ENCODE measurements at regions of chr13 and their contacts with region 1.

Region 1: DNA sequence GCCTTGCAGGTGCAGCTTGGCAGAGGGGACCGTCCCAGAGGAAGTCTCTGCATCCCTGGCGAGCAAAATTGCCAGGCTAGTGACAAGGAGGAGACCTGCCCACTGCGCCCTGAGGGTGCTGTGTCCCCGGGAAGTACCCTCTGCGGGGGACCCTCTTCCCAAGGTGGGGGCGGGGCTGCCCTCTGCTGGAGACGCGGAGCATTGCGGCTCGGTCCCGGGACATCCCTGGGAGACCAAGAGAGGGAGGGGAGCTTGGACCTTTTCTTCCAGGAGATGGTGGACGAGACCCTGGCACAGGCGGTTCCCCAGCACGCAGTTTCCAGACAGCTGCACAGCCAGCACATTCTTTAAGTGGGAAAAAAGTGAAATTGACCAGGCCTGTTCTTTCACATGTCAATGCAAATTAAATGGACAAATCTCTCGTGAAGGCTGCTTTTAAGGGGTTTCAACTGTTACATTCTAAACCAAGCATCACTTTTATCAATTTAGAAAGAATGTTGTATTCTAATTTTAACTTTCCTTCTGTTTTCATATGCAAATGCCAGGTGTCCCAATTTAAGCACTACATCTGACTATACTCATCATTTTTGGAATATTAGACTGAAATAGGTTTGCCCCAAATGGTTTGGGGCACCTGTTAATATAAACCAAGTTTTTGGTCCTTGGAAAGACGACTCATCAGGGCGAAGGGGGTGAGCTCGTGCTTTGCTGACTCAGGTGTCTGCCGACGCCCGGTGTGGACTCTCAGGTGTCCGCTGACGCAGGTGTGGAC is 60.7 kb downstream of the MCF2L start:
- DNase-seq: no peak
- ATAC-seq: peak; percentile 66

Region 2: DNA sequence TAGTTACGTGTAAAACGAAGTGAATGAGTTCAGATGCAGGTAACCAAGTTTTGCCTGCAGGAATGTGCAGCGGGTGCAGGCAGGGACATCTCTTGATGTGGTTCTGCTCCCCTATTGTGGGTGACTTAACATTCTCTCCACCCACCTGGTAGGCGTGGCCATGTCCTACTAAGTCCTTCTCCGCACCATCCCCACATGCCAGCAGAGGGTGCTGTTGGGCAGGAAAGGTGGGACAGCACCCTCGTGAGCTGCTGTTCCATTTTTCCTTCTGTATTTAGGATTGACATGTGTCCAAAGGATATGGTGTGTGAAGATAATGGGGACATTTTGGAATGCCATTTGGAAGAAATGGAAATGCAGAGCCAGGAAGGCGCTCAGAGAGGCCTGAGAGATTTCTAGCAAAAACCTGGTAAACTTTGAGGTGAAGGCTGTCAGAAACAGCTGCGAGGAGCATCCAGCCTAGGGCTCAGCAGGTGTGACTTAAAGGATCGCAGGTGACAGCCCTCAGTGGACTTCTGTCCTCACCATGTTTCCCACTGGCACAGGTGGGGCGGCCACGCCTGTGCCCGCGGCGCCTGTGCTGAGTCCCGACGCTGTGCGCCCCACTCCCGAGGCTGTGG is 86.9 kb before region 1 on chr13:
- intact Hi-C with region 1: loop called (anchors 10 kb)
- DNase-seq: peak; percentile 99
- ATAC-seq: peak; percentile 98

Region 3: DNA sequence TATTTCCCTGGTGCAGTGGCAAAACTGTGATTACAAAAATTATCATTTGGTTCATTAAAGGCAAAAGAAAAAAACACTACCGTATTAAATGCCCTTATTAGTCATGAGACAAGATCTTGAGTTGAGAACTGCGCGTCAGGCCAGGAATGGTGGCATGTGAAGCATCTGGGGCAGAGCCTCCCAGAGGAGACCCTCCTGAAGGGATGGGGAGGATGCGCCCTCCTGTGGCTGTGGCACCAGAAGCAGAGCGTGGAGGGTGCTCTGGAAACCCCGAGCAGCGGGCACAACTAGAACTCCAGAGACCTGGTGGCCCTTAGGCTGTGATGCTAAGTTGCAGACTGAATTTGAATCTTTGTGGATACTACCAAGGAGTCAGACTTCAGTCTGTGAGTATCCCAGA is 191.2 kb after region 1 on chr13:
- intact Hi-C with region 1: loop called (anchors 5 kb)
- DNase-seq: no peak
- ATAC-seq: peak; percentile 53

Measured in Right ventricle myocardium superior (tissue), 1 donor.